Panc1 (cell line): ENCODE measurements at regions of chr2 and their contacts with region 1.

Region 1: GRCh38 chr2:18178736-18179349 is 300.4 kb downstream of the KCNS3 start:
- DNase-seq: peak; percentile 25
- ATAC-seq: peak; percentile 87
- H3K4me3 ChIP-seq: no peak overlapping the region
- H3K27ac ChIP-seq: no peak overlapping the region
- H3K4me1 ChIP-seq: no peaks in the 10 kb centered on the region
- H3K27me3 ChIP-seq: no peaks in the 10 kb centered on the region
- CTCF ChIP-seq: peak; percentile 78

Region 2: DNA sequence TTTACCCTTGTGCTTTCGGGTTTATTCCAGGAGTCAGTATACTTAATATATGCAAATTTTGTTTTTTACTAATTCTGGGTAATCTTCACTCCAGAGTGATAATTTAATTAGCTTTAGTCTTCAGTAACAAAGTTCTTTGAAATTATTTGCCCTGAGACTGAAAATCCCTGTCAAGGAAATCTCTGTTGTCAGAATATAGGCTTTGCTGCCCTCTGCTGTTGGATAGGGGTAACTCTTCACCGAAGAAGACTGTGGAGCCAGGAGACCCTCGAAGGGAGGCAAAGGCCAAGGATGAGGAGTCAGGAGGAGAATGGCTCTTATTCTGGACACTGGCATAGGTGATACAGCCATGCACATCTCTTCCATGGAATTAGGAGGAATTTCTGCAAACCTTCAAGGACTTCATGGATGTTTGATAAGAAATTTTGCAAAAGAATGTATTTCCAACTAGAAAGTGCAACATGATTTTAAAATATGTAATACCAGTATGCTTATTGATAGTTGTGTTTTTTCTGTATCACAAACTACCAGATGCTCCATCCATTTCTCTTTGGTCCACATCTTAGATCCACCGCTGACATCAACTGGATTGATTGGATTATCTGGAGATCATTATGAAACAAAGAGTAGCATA is 199.3 kb after region 1 on chr2:
- CTCF ChIA-PET with region 1: interaction called, 3 read pairs
- POLR2A ChIA-PET with region 1: no interaction called
- in situ Hi-C with region 1: no loop called
- intact Hi-C with region 1: loop called (anchors 2 kb)
- DNase-seq: no peak
- ATAC-seq: peak; percentile 84
- H3K4me3 ChIP-seq: no peak overlapping the region
- H3K27ac ChIP-seq: no peak overlapping the region
- H3K4me1 ChIP-seq: no peaks in the 10 kb centered on the region
- H3K27me3 ChIP-seq: 0 out of 2 replicates have a peak, but pooled peaks cover 4% of the 10 kb centered on the region
- CTCF ChIP-seq: peak; percentile 86